ENCODE measurements at regions of chr15 and their contacts with region 1.

Region 1: DNA sequence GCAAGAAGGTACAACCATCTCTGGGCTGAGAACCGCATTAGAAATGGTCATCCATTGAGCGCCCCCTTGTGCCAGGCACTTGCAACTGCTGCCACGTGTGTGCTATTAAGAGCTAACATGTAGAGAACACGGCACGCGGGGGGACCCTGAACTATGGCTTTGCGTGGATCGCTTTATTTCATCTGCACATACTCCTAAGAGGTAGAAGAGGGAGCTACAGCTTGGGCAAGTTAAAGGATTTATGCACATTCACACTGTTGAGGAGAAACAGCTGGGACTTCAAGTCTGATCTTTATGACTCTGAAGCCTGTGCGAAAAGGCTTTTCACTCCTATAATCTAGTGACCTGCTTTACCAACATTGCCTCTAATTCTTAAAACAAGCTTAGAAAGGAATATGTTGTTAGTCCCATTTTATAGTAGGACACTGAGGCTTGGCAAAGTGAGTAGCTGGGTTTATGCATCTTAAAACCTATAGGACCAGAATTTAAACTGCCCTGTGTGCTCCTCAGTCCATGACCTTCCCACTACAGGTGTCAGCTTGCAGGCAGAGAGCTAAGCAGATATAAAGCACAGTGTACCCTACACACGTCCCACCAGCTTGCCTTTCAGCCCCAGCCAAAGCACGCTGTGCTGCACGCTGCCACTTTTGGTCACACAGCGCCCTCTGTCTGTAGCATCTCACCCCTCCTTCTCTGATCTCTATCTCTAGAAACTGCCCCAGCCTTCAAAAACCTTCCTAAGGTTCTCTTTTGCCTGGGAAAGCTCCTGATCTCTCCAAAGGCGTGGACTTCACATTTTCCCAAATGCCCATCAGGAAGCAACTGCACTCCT is 57.8 kb downstream of the STARD5 start:
- DNase-seq: peak; percentile 87
- H3K4me3 Mint-ChIP-seq: peak overlapping the region; percentile 47
- H3K27ac Mint-ChIP-seq: peak overlapping the region; percentile 45
- H3K4me1 Mint-ChIP-seq: peaks cover 25% of the 10 kb centered on the region
- H3K27me3 Mint-ChIP-seq: peaks cover 12% of the 10 kb centered on the region

Region 2: GRCh38 chr15:80455668-80456442 is 810.3 kb before region 1 on chr15:
- CTCF ChIA-PET with region 1: interaction called, 15 read pairs
- POLR2A ChIA-PET with region 1: no interaction called
- DNase-seq: peak; percentile 61
- H3K4me3 Mint-ChIP-seq: no peak overlapping the region
- H3K27ac Mint-ChIP-seq: no peak overlapping the region
- H3K4me1 Mint-ChIP-seq: peaks cover 4% of the 10 kb centered on the region
- H3K27me3 Mint-ChIP-seq: peaks cover 12% of the 10 kb centered on the region

Region 3: GRCh38 chr15:80934761-80935221 is 331.4 kb before region 1 on chr15:
- CTCF ChIA-PET with region 1: no interaction called
- POLR2A ChIA-PET with region 1: no interaction called
- DNase-seq: no peak
- H3K4me3 Mint-ChIP-seq: no peak overlapping the region
- H3K27ac Mint-ChIP-seq: no peak overlapping the region
- H3K4me1 Mint-ChIP-seq: peaks cover 8% of the 10 kb centered on the region
- H3K27me3 Mint-ChIP-seq: no peaks in the 10 kb centered on the region

Region 4: DNA sequence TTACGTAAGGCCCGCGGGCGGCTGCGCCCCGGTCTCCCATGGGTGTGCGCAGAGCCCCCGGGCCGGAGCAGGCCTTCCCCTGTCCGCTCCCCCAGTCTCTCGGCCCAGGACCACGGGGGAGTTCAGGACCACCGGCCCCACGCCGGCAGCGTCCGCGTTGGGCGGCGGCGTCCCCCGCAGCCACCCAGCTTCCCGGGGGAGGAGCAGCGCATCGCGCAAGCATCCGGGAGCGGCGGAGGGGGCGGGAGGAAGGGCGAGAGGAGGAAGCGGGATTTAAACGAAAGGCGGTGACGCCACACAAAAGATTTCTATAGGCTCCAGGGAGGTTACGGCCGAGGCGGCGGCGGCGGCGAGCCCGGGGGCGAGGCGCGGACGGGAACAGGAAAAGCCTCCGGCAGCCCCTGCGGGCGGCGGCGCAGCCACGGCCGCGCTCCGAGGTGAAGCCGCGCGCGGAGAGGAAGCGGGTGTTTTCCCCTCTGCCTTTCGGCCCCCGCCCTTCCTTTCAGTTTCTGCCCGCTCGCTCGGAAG is 265.5 kb before region 1 on chr15 and contains the start of gene TLNRD1:
- CTCF ChIA-PET with region 1: interaction called, 27 read pairs
- POLR2A ChIA-PET with region 1: interaction called, 7 read pairs
- DNase-seq: peak; percentile 91
- H3K4me3 Mint-ChIP-seq: peak within 1 kb of the TSS; percentile 98
- H3K27ac Mint-ChIP-seq: peak within 1 kb of the TSS; percentile 99
- H3K4me1 Mint-ChIP-seq: peaks cover 60% of the 10 kb centered on the region
- H3K27me3 Mint-ChIP-seq: no peaks in the 10 kb centered on the region
- total RNA-seq, gene TLNRD1: 47.1 to 48.8 TPM

Region 5: GRCh38 chr15:81133782-81134461 is 132.2 kb before region 1 on chr15 and contains the start of gene CFAP161:
- CTCF ChIA-PET with region 1: interaction called, 14 read pairs
- POLR2A ChIA-PET with region 1: no interaction called
- DNase-seq: peak; percentile 26
- H3K4me3 Mint-ChIP-seq: no peak within 1 kb of the TSS
- H3K27ac Mint-ChIP-seq: no peak within 1 kb of the TSS
- H3K4me1 Mint-ChIP-seq: peaks cover 6% of the 10 kb centered on the region
- H3K27me3 Mint-ChIP-seq: peaks cover 73% of the 10 kb centered on the region
- total RNA-seq, gene CFAP161: not detected

Region 6: GRCh38 chr15:81195339-81195864 is 70.8 kb before region 1 on chr15:
- CTCF ChIA-PET with region 1: interaction called, 10 read pairs
- POLR2A ChIA-PET with region 1: no interaction called
- DNase-seq: no peak
- H3K4me3 Mint-ChIP-seq: no peak overlapping the region
- H3K27ac Mint-ChIP-seq: no peak overlapping the region
- H3K4me1 Mint-ChIP-seq: peaks cover 5% of the 10 kb centered on the region
- H3K27me3 Mint-ChIP-seq: peaks cover 32% of the 10 kb centered on the region

Region 7: DNA sequence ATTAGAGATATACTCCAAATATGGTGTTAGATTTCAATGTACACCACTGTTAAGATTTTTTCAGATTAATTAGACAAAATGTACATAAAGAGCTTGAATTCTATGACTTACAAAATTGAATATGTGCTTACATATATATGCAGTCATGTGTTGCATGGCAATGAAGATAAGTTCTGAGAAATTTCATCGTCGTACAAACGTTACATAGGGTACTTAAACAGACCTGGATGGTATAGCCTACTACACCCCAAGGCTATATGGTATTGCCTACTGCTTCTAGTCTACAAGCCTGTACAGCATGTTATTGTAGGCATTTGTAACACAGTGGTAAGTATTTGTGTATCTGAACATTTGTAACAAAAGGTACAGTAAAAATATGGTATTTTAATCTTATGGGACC is 60.1 kb before region 1 on chr15:
- CTCF ChIA-PET with region 1: no interaction called
- POLR2A ChIA-PET with region 1: no interaction called
- DNase-seq: no peak
- H3K4me3 Mint-ChIP-seq: no peak overlapping the region
- H3K27ac Mint-ChIP-seq: no peak overlapping the region
- H3K4me1 Mint-ChIP-seq: no peaks in the 10 kb centered on the region
- H3K27me3 Mint-ChIP-seq: peaks cover 25% of the 10 kb centered on the region

Region 8: GRCh38 chr15:81296673-81297072 is 30.5 kb after region 1 on chr15:
- CTCF ChIA-PET with region 1: interaction called, 35 read pairs
- POLR2A ChIA-PET with region 1: interaction called, 4 read pairs
- DNase-seq: peak; percentile 87
- H3K4me3 Mint-ChIP-seq: peak overlapping the region; percentile 98
- H3K27ac Mint-ChIP-seq: peak overlapping the region; percentile 96
- H3K4me1 Mint-ChIP-seq: peaks cover 64% of the 10 kb centered on the region
- H3K27me3 Mint-ChIP-seq: no peaks in the 10 kb centered on the region

Region 9: DNA sequence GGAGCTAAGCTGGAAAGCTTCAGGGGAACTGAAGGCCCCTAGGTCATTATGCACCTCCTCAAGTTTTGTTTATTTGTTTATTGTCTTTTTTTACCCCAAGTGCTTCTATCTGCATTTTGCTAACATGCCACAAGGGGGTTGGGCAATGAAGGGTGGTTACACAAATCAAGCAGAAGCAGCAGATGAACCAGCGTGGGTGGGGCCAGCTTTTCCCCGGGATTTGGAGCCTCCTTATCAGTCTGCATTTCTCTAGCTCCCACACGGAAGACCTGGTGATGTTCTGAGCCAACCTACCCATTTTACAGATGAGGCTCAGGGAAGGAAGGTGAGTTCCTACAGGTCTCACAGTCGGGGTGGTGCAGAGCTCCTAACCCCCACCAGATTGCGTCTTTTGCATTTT is 91.1 kb after region 1 on chr15:
- CTCF ChIA-PET with region 1: interaction called, 17 read pairs
- POLR2A ChIA-PET with region 1: no interaction called
- DNase-seq: no peak
- H3K4me3 Mint-ChIP-seq: no peak overlapping the region
- H3K27ac Mint-ChIP-seq: no peak overlapping the region
- H3K4me1 Mint-ChIP-seq: no peaks in the 10 kb centered on the region
- H3K27me3 Mint-ChIP-seq: peaks cover 6% of the 10 kb centered on the region

Region 10: DNA sequence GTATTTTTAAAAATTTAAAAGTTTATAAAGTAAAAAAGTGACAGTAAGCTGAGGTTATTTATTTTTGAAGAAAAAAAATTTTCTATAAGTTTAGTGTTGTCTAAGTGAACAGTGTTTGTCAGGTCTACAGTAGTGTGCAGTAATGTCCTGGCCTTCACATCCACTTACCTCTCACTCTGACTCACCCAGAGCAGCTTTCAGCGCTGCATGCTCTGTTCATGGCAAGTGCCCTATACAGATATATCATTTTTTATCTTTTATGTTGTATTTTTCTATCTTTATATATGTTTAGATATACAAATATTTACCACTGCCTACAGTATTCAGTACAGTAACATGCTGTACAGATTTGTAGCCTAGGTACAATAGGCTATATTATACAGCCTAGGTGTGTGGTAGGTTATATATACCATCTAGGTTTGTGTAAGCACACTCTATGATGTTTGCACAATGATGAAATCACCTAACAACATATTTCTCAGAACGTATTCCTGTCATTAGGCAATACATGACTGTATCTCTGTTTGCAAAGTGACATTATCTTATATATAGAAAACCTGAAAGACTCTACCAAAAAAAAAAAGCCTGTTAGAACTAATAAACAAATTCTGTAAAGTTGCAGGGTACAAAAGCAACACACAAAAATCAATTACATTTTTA is 183.8 kb after region 1 on chr15:
- CTCF ChIA-PET with region 1: no interaction called
- POLR2A ChIA-PET with region 1: no interaction called
- DNase-seq: no peak
- H3K4me3 Mint-ChIP-seq: no peak overlapping the region
- H3K27ac Mint-ChIP-seq: no peak overlapping the region
- H3K4me1 Mint-ChIP-seq: no peaks in the 10 kb centered on the region
- H3K27me3 Mint-ChIP-seq: peaks cover 20% of the 10 kb centered on the region